Posterior vena cava (tissue), 2 donors: ENCODE measurements at regions of chr10 and their contacts with region 1.

Region 1: DNA sequence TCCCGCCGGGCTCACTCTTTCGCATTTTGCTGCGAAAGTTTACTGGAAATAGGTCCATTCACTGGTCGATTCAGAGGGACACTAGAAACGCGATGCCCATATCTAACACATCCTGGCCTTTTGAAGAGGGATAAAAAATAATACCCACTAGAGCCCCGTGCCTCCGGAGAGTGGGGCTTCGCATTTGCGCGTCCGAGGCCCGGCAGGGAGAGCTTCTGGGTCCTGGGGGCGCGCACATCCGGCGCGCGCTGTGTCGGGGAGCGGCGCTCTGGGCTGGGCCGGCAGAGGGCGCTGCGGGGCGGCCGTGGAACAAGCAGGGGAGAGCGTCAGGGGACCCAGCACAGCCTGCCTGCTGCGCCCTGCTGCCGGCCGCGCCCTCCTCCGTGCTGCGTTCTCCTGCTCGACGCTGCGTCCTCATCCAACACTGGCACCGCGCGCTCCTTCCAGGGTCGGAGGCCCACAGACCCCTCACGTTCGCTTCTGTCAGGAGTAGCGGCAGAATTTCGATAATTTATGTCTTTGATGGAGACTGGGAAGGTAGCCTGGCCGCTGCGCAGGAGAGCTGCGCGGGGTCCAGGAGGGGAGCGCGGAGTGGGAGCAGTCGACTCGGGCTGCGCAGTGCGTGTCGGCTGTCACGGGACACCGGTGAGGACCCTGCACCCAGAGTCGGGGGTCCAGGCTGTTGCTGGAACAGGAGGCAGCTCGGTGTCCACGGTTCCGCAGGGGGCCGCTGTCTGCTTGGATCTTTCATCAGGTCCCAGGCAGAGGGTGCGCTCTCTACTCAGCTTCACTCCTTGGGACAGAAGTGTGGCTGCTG is 41.5 kb upstream of the ZNF32 start:
- DNase-seq: peak; percentile 96

Region 2: GRCh38 chr10:42680267-42680666 is 1009.9 kb before region 1 on chr10:
- intact Hi-C with region 1: no loop called
- DNase-seq: no peak

Region 3: GRCh38 chr10:43857206-43857930 is 167.2 kb after region 1 on chr10:
- intact Hi-C with region 1: loop called (anchors 10 kb)
- DNase-seq: peak; percentile 76

Region 4: GRCh38 chr10:43863859-43864591 is 173.9 kb after region 1 on chr10:
- intact Hi-C with region 1: loop called (anchors 10 kb)
- DNase-seq: peak; percentile 82

Region 5: GRCh38 chr10:44046605-44047004 is 356.4 kb after region 1 on chr10:
- intact Hi-C with region 1: loop called in 1 of 2 experiments (anchors 10 kb)
- DNase-seq: no peak

Region 6: GRCh38 chr10:44310762-44311562 is 620.8 kb after region 1 on chr10:
- intact Hi-C with region 1: loop called in 1 of 2 experiments (anchors 5 kb)
- DNase-seq: peak; percentile 96